ENCODE measurements at regions of chr1 and their contacts with region 1.

Region 1: DNA sequence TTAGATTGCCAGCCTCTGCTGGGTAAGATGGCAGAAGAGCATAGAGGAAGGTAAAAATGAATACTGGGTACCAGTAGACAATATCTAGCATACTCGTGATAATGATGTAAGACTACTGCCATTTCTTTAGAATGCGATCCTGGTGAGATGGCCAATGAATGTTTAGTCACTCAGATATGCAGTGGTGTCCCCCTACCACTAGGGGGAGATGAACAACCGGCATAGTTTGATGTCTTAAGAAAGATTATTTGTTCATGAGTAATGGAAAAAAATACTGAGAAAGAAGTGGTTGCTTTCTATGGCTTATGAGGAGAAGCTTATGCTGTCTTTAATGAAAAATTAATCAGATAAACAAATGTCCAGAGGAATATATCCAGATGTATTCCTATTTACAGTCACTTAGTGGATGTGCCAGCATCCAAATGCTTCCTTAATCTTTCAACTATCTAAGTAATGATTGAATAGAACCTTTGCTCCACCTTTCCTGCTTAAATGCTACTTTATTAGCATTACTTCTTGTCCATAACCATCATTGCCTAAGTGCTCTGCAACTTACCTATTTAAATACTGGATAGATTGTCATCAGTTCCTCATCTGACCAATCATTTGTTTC is 256.6 kb downstream of the ST6GALNAC3 start:
- DNase-seq: peak in 1 of 2 donors; percentile 65
- ATAC-seq: peak in 2 of 3 donors; percentile 36 to 60
- H3K4me3 ChIP-seq: no peak overlapping the region
- H3K4me3 Mint-ChIP-seq: no peak overlapping the region
- H3K27ac ChIP-seq: no peak overlapping the region
- H3K27ac Mint-ChIP-seq: no peak overlapping the region
- H3K4me1 ChIP-seq: no peaks in the 10 kb centered on the region
- H3K4me1 Mint-ChIP-seq: no peaks in the 10 kb centered on the region
- H3K27me3 ChIP-seq: no peaks in the 10 kb centered on the region
- H3K27me3 Mint-ChIP-seq: no peaks in the 10 kb centered on the region
- CTCF ChIP-seq: peak; percentile 88

Region 2: GRCh38 chr1:76260279-76260678 is 70.8 kb before region 1 on chr1:
- intact Hi-C with region 1: no loop called
- DNase-seq: peak in 1 of 2 donors; percentile 24
- ATAC-seq: peak in 1 of 3 donors; percentile 50
- H3K4me3 ChIP-seq: no peak overlapping the region
- H3K4me3 Mint-ChIP-seq: no peak overlapping the region
- H3K27ac ChIP-seq: no peak overlapping the region
- H3K27ac Mint-ChIP-seq: no peak overlapping the region
- H3K4me1 ChIP-seq: no peaks in the 10 kb centered on the region
- H3K4me1 Mint-ChIP-seq: peaks cover 6 to 8% of the 10 kb centered on the region in 2 donors
- H3K27me3 ChIP-seq: no peaks in the 10 kb centered on the region
- H3K27me3 Mint-ChIP-seq: no peaks in the 10 kb centered on the region
- CTCF ChIP-seq: no peak

Region 3: GRCh38 chr1:76279101-76279748 is 51.9 kb before region 1 on chr1:
- intact Hi-C with region 1: no loop called
- DNase-seq: no peak
- ATAC-seq: no peak
- H3K4me3 ChIP-seq: no peak overlapping the region
- H3K4me3 Mint-ChIP-seq: no peak overlapping the region
- H3K27ac ChIP-seq: no peak overlapping the region
- H3K27ac Mint-ChIP-seq: no peak overlapping the region
- H3K4me1 ChIP-seq: no peaks in the 10 kb centered on the region
- H3K4me1 Mint-ChIP-seq: no peaks in the 10 kb centered on the region
- H3K27me3 ChIP-seq: no peaks in the 10 kb centered on the region
- H3K27me3 Mint-ChIP-seq: no peaks in the 10 kb centered on the region
- CTCF ChIP-seq: no peak

Region 4: DNA sequence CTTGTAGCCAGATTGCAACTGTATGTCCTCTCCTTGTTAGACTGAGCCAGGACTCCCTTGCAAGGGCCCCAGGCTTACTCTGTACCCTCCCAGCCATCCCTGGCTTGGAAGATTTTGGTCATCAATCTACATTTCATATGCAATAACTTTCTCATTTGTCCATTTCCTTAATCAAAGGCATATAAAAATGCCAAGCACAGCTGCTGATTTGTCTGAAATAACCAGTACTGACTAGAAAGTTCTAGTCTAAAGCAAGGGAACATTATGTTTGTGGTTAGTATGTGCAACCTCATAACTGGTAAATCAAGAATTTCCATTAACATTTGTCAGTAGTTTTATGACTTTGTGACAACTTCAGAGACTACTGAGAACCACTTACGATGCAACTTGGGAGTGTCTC is 113.7 kb after region 1 on chr1:
- intact Hi-C with region 1: no loop called
- DNase-seq: no peak
- ATAC-seq: no peak
- H3K4me3 ChIP-seq: no peak overlapping the region
- H3K4me3 Mint-ChIP-seq: no peak overlapping the region
- H3K27ac ChIP-seq: no peak overlapping the region
- H3K27ac Mint-ChIP-seq: no peak overlapping the region
- H3K4me1 ChIP-seq: no peaks in the 10 kb centered on the region
- H3K4me1 Mint-ChIP-seq: no peaks in the 10 kb centered on the region
- H3K27me3 ChIP-seq: no peaks in the 10 kb centered on the region
- H3K27me3 Mint-ChIP-seq: no peaks in the 10 kb centered on the region
- CTCF ChIP-seq: no peak

Region 5: DNA sequence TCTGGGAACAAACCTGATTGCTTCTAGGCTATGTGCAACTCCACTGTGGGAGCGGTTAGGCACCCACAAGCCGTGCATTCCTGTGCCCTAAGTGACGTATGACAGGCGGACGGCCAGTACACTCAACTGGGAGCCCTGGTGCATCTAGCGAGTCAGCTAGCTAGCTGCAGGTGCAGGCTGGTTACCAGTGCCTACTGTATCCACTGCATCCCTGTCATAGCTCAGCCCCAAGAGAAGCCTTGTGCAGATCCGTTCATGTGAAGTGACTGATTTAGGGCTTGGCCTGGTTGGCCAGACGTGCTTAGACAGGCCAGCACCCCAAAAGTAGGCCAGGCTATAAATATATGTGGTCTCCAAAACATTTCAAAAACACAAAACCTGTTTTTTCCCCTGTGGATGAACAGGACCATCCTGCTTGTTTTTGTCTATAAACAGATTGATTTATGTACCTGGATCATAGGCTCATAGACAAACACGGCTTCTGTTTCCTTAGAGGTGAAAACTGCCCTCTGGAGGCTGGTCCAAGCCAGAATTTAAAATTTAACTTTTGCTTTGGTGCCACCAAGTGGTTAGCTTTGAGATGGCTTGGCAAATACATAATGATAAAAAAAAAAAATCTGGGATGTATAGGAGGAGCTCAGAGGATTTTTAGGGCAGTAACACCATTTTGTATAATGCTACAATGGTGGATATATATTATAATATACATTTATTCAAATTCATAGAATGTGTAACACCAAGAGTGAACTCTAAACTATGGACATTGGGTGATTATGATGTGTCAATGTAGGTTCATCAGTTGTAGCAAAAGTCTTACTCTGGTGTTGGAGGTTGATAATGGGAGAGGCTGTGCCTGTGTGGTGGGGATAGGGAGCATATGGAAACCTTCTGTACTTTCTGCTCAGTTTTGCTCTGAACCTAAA is 1783.2 kb after region 1 on chr1:
- intact Hi-C with region 1: loop called (anchors 10 kb)
- DNase-seq: peak in 1 of 2 donors; percentile 80
- ATAC-seq: peak; percentile 75 to 92 (median 88)
- H3K4me3 ChIP-seq: no peak overlapping the region
- H3K4me3 Mint-ChIP-seq: no peak overlapping the region
- H3K27ac ChIP-seq: no peak overlapping the region
- H3K27ac Mint-ChIP-seq: no peak overlapping the region
- H3K4me1 ChIP-seq: no peaks in the 10 kb centered on the region
- H3K4me1 Mint-ChIP-seq: no peaks in the 10 kb centered on the region
- H3K27me3 ChIP-seq: no peaks in the 10 kb centered on the region
- H3K27me3 Mint-ChIP-seq: peaks cover 0 to 3% of the 10 kb centered on the region in 2 donors
- CTCF ChIP-seq: peak; percentile 72

Measured in natural killer cell (primary cell).